Activated T-helper 1 cell treated with anti-CD3 and anti-CD28 coated beads, Interleukin-12 subunit alpha, Interleukin-12 subunit beta, Interleukin-2, Interleukin-4 antibody, amounts not matched to agents 30 ng/mL and 10 ng/mL and 1 ng/mL, durations not matched to agents 14 hours and 24 hours and 36 hours (primary cell): ENCODE measurements at regions of chr1 and their contacts with region 1.

Region 1: DNA sequence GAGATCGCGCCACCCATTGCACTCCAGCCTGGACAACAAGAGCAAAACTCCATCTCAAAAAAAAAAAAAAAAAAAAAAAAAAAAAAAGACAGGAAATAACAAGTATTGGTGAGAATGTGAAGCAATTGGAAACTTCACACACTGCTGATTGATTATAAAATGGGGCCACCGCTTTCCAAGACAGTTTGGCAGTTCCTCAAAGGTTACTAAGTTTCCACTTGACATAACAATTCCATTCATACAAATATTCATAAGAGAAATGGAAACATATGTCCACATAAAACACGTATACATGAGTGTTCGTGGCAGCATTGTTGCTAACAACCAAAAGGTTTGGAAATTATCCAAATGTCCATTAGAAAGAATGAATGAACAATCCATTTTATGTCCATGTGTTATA is 26.3 kb downstream of the USP24 start:
- DNase-seq: no peak
- H3K4me3 Mint-ChIP-seq: no peak overlapping the region
- H3K27ac Mint-ChIP-seq: peak overlapping the region; percentile 60
- H3K4me1 Mint-ChIP-seq: peaks cover 24% of the 10 kb centered on the region
- H3K27me3 Mint-ChIP-seq: no peaks in the 10 kb centered on the region

Region 2: GRCh38 chr1:55204997-55205396 is 16.1 kb after region 1 on chr1:
- intact Hi-C with region 1: loop called (anchors 2 kb)
- DNase-seq: no peak
- H3K4me3 Mint-ChIP-seq: peak overlapping the region; percentile 16
- H3K27ac Mint-ChIP-seq: peak overlapping the region; percentile 62
- H3K4me1 Mint-ChIP-seq: peaks cover 60% of the 10 kb centered on the region
- H3K27me3 Mint-ChIP-seq: no peaks in the 10 kb centered on the region

Region 3: GRCh38 chr1:55310505-55310971 is 121.6 kb after region 1 on chr1:
- intact Hi-C with region 1: no loop called
- DNase-seq: no peak
- H3K4me3 Mint-ChIP-seq: no peak overlapping the region
- H3K27ac Mint-ChIP-seq: no peak overlapping the region
- H3K4me1 Mint-ChIP-seq: peaks cover 4% of the 10 kb centered on the region
- H3K27me3 Mint-ChIP-seq: peaks cover 10% of the 10 kb centered on the region

Region 4: DNA sequence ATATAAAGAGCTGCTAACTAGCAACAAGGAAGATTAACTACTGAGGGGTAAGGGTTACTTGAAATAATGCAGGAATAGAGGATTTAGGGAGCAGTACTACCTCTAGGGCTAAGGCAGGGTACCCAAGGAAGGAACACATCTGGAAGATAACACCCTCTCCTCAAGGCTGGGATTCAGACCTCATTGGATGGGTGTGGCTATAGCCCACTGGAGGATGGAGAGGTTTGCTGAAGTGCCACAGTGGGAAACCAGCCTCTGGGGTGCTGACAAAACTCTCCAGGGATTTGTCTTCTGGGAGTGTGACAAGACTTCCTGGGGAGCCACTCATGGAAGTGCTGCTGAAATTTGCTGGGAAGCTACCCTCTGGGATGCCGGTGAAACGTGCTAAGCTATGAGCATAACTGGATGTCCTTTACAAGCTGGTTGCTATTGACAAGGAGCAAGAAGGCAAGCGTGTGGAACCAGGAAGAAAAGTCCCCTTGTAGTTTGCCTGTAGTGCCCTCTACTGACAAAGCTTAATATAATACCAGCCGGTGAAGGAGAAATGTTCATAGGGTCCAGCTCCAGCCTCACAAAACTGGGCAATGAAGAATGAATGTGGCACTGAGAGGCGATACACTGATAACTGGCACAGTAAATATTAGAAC is 149.0 kb after region 1 on chr1:
- intact Hi-C with region 1: no loop called
- DNase-seq: peak; percentile 2
- H3K4me3 Mint-ChIP-seq: no peak overlapping the region
- H3K27ac Mint-ChIP-seq: no peak overlapping the region
- H3K4me1 Mint-ChIP-seq: peaks cover 6% of the 10 kb centered on the region
- H3K27me3 Mint-ChIP-seq: peaks cover 2% of the 10 kb centered on the region